ENCODE measurements at regions of chr18 and their contacts with region 1.

Region 1: GRCh38 chr18:70431203-70431624 is 142.4 kb downstream of the SOCS6 start:
- DNase-seq: no peak
- H3K4me3 ChIP-seq: no peak overlapping the region
- H3K27ac ChIP-seq: no peak overlapping the region
- H3K4me1 ChIP-seq: no peaks in the 10 kb centered on the region
- H3K27me3 ChIP-seq: no peaks in the 10 kb centered on the region
- CTCF ChIP-seq: no peak
- POLR2A ChIP-seq: no peak

Region 2: DNA sequence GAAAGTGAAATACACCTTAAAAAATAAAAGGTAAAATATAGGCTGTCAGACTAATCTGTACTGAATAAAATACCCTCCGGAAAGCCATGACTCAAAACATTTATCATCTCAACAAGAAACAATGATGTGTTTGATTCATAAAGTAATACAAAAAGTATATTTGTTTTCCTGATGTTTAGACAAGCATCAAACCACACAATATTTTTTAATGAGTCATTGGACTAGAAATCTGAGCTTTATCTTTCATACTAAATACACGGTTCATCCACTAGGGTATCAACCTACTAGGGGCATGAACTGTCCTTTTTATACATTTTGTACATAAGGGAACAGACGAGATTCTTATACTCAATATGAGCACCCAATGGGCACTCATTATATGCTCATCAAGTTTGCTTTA is 514.8 kb before region 1 on chr18:
- CTCF ChIA-PET with region 1: no interaction called
- POLR2A ChIA-PET with region 1: no interaction called
- dilution Hi-C with region 1: no loop called
- intact Hi-C with region 1: no loop called
- DNase-seq: no peak
- H3K4me3 ChIP-seq: no peak overlapping the region
- H3K27ac ChIP-seq: no peak overlapping the region
- H3K4me1 ChIP-seq: no peaks in the 10 kb centered on the region
- H3K27me3 ChIP-seq: no peaks in the 10 kb centered on the region
- CTCF ChIP-seq: no peak
- POLR2A ChIP-seq: no peak

Region 3: GRCh38 chr18:70165936-70166335 is 265.3 kb before region 1 on chr18:
- CTCF ChIA-PET with region 1: interaction called, 38 read pairs
- POLR2A ChIA-PET with region 1: no interaction called
- dilution Hi-C with region 1: no loop called
- intact Hi-C with region 1: no loop called
- DNase-seq: peak; percentile 18
- H3K4me3 ChIP-seq: no peak overlapping the region
- H3K27ac ChIP-seq: no peak overlapping the region
- H3K4me1 ChIP-seq: no peaks in the 10 kb centered on the region
- H3K27me3 ChIP-seq: no peaks in the 10 kb centered on the region
- CTCF ChIP-seq: no peak
- POLR2A ChIP-seq: no peak

Region 4: DNA sequence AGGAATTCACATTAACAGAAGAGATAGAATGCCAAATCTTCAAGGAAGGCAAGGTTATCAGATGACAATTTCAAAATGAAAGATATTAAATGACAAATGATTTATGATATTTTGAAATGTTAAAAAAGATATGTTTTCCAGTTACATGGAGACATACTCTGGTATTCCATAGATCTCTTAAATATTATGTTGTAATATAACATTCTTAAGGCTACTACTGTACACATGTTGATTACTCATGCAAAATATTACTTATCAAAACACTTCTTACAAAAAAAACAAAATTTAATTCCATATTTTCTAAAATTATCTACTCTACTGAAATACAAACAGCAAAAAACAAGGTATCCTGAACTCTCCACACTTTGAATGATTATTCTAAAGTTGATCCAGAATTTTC is 248.7 kb before region 1 on chr18:
- CTCF ChIA-PET with region 1: interaction called, 22 read pairs
- POLR2A ChIA-PET with region 1: no interaction called
- dilution Hi-C with region 1: no loop called
- intact Hi-C with region 1: no loop called
- DNase-seq: no peak
- H3K4me3 ChIP-seq: no peak overlapping the region
- H3K27ac ChIP-seq: peak overlapping the region; percentile 42
- H3K4me1 ChIP-seq: peaks cover 19% of the 10 kb centered on the region
- H3K27me3 ChIP-seq: no peaks in the 10 kb centered on the region
- CTCF ChIP-seq: no peak
- POLR2A ChIP-seq: no peak

Region 5: GRCh38 chr18:70195852-70196434 is 235.3 kb before region 1 on chr18:
- CTCF ChIA-PET with region 1: interaction called, 304 read pairs
- POLR2A ChIA-PET with region 1: no interaction called
- dilution Hi-C with region 1: no loop called
- intact Hi-C with region 1: loop called (anchors 1 kb)
- DNase-seq: peak; percentile 57
- H3K4me3 ChIP-seq: no peak overlapping the region
- H3K27ac ChIP-seq: no peak overlapping the region
- H3K4me1 ChIP-seq: no peaks in the 10 kb centered on the region
- H3K27me3 ChIP-seq: no peaks in the 10 kb centered on the region
- CTCF ChIP-seq: peak; percentile 62 to 64
- POLR2A ChIP-seq: no peak

Region 6: DNA sequence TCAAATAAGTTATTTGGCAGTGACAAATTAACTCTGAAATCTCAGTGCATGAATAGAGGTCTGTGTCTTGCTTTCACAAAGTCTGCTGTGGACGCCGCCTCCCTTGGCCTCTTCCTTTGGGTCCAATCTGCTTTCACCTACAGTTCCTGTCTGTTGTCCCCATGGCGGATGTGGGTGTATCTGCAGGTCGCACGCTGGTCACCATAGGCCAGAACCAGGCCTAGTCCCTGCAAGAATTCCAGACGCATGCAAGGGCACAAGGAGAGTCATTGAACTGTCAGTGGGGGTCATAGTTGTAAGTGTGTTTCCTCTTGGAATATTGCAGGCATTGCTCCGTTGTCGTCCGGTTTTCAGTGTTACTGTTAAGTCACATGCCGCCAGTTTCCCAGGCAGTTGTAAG is 134.9 kb before region 1 on chr18:
- CTCF ChIA-PET with region 1: interaction called, 15 read pairs
- POLR2A ChIA-PET with region 1: no interaction called
- dilution Hi-C with region 1: no loop called
- intact Hi-C with region 1: no loop called
- DNase-seq: peak; percentile 50
- H3K4me3 ChIP-seq: peak overlapping the region in 1 of 3 experiments; percentile 0
- H3K27ac ChIP-seq: no peak overlapping the region
- H3K4me1 ChIP-seq: peaks cover 21% of the 10 kb centered on the region
- H3K27me3 ChIP-seq: no peaks in the 10 kb centered on the region
- CTCF ChIP-seq: no peak
- POLR2A ChIP-seq: no peak

Region 7: DNA sequence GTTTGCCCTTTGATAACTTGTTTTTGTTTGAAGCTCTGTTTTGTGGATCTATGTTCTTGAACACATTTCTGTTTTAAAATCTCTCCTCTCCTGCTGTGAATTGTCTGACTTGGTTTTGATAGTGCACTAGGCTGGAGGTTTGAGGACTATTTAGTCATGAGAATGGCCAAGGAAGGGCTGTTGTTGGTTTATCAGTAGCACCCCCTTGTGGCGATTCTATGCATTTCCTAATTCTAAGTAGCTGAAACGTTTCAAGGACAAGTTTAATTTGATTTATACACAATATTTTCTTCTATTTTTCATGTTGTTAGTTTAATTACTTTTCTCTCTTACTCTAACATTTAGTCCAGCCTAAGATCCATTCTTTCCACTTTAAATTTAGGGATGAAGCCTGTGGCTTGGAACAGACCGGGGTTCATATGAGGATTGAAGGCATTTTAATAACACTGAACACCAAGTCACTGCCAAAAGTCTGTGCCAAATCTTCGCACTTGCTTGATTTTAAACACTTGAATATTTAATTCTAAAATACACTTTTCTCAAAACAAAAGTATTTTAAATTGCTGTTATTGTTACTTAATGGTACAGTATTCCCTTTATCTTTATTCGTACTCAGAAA is 23.6 kb after region 1 on chr18:
- CTCF ChIA-PET with region 1: interaction called, 12 read pairs
- POLR2A ChIA-PET with region 1: no interaction called
- dilution Hi-C with region 1: no loop called
- intact Hi-C with region 1: no loop called
- DNase-seq: peak; percentile 67
- H3K4me3 ChIP-seq: no peak overlapping the region
- H3K27ac ChIP-seq: no peak overlapping the region
- H3K4me1 ChIP-seq: no peaks in the 10 kb centered on the region
- H3K27me3 ChIP-seq: no peaks in the 10 kb centered on the region
- CTCF ChIP-seq: peak; percentile 61 to 76
- POLR2A ChIP-seq: no peak